Esophagus muscularis mucosa (tissue), 4 donors: ENCODE measurements at regions of chr1 and their contacts with region 1.

Region 1: GRCh38 chr1:19251305-19252196 is at the starts of genes EMC1 and MRTO4:
- DNase-seq: peak; percentile 95
- H3K4me3 ChIP-seq: peak within 1 kb of the TSS; percentile 77 to 92 (median 86)
- H3K27ac ChIP-seq: peak within 1 kb of the TSS; percentile 83 to 94 (median 92)
- H3K4me1 ChIP-seq: peaks cover 30 to 47% (median 39%) of the 10 kb centered on the region in 4 donors
- H3K27me3 ChIP-seq: no peaks in the 10 kb centered on the region
- CTCF ChIP-seq: no peak
- EP300 ChIP-seq: no peak
- POLR2A ChIP-seq: no peak
- total RNA-seq, gene EMC1: 16.2 to 43.1 (median 36.1) TPM
- total RNA-seq, gene MRTO4: 10.0 to 26.2 (median 16.9) TPM

Region 2: DNA sequence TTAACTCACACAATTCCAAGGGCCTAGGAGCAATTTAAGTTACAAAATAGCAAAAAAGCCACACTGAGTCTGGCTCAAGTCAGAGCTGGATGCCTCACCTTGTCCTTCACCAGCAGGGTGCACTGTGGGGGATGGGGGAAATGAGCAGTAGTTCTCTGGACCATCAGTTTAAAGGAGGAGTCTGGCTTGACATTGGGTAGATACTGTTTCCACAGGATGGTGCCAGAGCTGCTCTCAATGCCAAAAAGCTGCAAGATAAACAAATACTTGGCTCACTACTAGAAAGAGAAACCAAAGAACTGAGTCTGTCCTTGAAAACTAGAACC is 19.1 kb before region 1 on chr1:
- intact Hi-C with region 1: no loop called
- DNase-seq: no peak
- H3K4me3 ChIP-seq: no peak overlapping the region
- H3K27ac ChIP-seq: peak overlapping the region; percentile 68 to 84 (median 71)
- H3K4me1 ChIP-seq: peaks cover 13 to 33% (median 33%) of the 10 kb centered on the region in 4 donors
- H3K27me3 ChIP-seq: no peaks in the 10 kb centered on the region
- CTCF ChIP-seq: peak in 2 of 3 experiments; percentile 23 to 32
- EP300 ChIP-seq: no peak
- POLR2A ChIP-seq: no peak

Region 3: GRCh38 chr1:19309123-19309813 is 57.7 kb after region 1 on chr1:
- intact Hi-C with region 1: loop called (anchors 10 kb)
- DNase-seq: no peak
- H3K4me3 ChIP-seq: no peak overlapping the region
- H3K27ac ChIP-seq: no peak overlapping the region
- H3K4me1 ChIP-seq: peaks cover 17 to 45% (median 36%) of the 10 kb centered on the region in 4 donors
- H3K27me3 ChIP-seq: no peaks in the 10 kb centered on the region
- CTCF ChIP-seq: no peak
- EP300 ChIP-seq: no peak
- POLR2A ChIP-seq: no peak